HEK293T (cell line): ENCODE measurements at regions of chrX and their contacts with region 1.

Region 1: DNA sequence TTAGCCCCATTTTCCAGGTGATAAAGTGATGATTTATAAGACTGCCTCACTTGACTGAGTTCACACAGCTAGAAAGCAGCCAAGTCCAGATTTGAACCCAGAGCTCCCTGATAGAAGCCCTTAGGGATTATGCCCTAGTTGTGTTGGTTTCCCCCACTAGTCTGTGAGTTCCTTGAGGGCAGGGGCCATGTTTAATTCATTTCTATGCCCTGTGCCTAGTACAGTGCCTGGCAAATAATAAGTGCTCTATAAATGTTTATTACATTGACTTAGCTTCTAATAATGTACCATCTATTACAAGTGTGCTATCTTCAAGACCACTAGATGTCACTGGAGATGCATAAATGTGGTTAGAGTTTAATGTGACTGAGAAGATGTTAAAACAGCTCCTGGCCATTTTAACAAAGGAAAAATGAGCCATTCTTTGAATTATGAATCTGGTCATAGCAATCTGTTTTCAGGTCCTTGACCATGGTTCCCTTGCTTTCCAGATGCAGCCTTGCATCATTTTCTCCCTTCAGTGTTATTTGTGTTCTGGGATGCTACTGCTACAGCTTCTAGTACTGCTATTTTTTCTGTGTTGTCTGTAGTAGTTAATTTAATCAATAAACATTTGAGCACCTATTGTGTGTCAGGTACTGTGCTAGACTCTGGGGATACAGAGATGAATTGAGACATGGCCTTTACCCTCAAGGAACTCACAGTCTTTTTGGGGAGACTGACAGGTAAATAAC is 43.2 kb downstream of the SLC9A6 start:
- DNase-seq: peak; percentile 46

Region 2: DNA sequence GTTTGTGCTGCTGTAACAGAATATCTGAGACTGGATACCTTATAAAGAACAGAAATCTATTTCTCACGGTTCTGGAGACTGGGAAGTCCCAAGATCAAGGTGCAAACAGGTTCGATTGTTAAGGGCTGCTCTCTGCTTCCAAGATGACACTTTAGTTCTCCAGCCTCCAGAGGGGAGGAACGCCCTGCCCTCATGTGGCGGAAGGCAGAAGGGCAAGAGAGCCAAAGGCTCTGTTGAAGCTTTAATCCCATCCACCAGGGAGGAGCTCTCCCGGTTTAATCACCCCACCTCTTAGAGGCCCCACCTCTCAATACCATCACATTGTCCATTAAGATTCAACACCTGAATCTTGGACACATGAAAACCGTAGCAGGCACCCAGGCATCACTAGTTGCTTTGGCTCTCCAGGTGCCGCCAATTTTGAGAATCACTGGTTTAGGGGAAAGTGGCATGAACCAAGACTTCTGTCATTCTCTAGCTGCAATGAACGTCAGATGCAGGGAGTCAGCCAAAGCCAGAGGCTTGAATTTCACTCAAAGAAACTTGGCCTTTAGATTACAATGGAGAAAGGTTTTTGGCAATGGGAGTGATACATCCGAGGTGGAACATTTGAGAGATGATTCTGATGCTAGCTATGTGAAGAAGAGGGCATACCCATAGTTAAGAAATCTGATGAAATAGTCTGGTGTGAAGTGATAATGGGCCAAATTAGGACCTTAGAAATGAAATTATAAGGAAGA is 134.6 kb after region 1 on chrX:
- CTCF ChIA-PET with region 1: interaction called, 57 read pairs
- POLR2A ChIA-PET with region 1: interaction called, 10 read pairs
- DNase-seq: peak; percentile 70

Region 3: DNA sequence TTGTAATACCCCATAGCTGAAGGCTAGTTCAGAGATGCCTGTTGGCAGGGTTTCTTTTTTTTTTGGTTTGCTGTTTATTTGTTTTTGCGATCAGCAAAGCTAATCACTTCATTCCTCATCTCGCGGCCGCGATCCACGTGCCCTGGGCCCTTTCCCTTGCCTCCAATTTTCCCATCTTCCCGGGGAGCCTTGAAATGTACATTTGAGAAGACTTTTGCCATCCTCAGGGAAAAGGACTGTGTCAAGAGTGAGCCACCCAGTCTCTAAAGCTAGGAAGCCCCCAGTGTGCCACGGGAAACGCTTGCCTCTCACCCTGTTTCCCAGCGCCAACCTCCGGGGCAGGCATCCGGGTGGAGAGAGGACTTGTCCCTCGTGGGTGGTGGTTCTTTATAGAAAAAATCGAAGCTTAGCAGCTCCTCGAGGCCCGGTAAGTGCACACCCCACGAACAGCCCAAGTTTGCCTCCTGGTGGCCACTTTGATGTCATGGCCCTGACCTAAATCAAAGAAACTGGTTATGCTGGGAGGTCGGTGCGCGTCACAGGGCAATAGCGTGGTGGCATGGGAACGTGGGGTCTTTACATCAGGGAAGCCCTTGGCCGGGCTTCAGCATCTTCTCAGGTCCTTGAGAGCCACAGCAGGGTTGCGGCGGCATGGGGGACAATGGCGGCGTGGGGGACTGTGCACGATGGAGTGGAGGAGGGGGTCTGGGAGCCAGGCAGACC is 180.8 kb after region 1 on chrX:
- CTCF ChIA-PET with region 1: interaction called, 22 read pairs
- POLR2A ChIA-PET with region 1: interaction called, 3 read pairs
- DNase-seq: peak; percentile 69

Region 4: DNA sequence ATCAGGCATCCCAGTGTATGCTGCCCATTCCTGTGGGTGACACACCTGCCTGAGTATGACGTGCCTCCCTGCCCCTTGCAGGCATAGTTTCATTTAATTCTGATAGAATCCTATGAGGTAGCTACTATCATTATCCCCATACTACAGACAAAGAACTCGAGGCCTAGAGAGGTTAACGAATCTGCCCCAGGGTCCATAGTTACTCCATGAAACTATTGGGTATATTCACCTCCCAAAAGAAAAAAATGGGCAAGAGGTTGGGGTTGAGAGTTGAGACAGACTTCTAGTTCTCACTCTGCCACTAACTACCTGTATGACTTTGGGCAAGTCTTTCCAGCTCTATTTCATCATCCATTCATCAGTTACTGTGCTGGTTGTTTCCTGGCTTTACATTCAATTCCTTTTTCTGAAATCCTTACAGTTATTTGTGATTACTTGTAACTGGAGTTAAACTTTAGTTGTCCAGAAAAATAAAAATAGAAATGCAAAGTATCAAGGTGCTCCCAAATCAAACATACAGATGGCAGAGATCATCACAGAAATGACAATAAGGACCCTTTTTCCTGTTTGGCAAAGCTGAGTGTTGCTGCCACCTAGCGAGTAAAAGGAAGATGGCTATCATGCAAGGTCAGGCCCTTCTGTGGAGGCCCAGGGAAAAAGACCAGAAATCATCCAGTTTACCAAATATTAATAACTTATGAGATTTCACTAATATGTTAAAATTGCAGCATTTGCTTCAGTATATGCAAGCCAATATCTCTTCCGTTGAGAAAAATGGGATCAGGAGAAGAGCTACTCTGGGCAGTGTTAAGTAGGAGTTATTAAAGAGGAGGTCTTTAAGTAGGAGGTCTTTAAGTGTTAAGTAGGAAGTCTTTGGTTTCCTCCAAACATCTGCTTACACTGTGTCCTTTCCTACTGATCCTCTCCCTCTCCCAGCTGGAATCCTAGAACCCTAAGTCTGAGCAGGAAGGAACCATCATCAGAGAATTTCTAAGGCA is 239.9 kb after region 1 on chrX:
- CTCF ChIA-PET with region 1: interaction called, 41 read pairs
- POLR2A ChIA-PET with region 1: interaction called, 3 read pairs
- DNase-seq: peak; percentile 63